K562 (cell line): ENCODE measurements at regions of chr12 and their contacts with region 1.

Region 1: DNA sequence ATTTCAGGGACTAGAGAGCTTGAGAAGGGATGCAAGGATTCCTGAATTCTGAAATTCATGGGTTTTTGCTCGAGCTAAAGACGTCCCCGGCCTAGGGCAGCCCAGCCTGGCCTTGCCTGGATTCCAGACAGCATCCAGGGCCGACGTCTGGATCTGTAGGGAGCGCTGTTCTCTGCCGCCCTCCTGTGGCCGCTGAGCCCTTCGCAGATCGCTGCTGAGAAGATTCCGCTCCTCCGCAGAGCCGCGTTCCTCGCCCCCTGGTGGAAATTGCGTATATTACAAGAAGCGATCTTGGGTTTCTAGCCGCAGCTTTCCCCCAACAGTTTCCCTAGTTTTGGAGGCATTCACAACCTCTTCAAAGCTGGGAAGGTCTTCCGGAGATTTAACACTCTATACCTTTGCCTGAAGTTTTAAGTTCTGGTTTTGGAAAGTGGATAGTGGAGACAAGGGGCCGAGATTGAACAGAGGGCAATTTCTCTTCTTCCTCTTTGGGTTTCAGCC is 5.1 kb downstream of the CISTR start:
- DNase-seq: peak; percentile 89 to 91 (median 90)
- ATAC-seq: peak; percentile 95
- H3K4me3 ChIP-seq: no peak overlapping the region
- H3K27ac ChIP-seq: no peak overlapping the region
- H3K4me1 ChIP-seq: peaks cover 0 to 11% of the 10 kb centered on the region in 2 experiments; a peak in 4 of 5 replicates
- H3K27me3 ChIP-seq: peaks cover 42 to 87% of the 10 kb centered on the region in 2 experiments
- CTCF ChIP-seq: peak; percentile 100
- EP300 ChIP-seq: no peak
- POLR2A ChIP-seq: no peak
- RAD21 ChIP-seq: peak; percentile 91 to 96

Region 2: DNA sequence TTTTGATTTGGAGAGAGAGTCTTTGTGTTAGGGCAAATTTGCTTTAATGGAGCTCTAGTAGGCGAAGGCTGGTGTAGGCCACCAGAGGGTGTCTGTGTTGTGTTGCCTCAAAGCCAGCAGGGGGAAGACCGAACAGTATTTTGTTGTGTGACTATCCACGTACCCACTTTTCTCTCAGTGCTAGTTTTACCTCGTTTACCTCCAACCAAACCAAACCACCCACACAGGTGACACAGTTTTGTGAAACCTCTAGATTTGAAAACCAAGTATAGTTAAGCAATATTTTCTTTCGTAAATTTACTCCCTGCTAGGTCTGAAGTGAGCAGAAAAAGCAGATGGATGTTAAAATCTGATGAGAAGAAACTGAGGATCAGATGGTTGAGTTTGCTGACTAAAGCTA is 203.1 kb before region 1 on chr12:
- CTCF ChIA-PET with region 1: interaction called, 13 read pairs
- POLR2A ChIA-PET with region 1: no interaction called
- in situ Hi-C with region 1: no loop called
- intact Hi-C with region 1: loop called (anchors 2 kb)
- DNase-seq: peak; percentile 42 to 63 (median 58)
- ATAC-seq: peak; percentile 98
- H3K4me3 ChIP-seq: no peak overlapping the region
- H3K27ac ChIP-seq: no peak overlapping the region
- H3K4me1 ChIP-seq: no peaks in the 10 kb centered on the region; a peak in 1 of 5 replicates
- H3K27me3 ChIP-seq: no peaks in the 10 kb centered on the region
- CTCF ChIP-seq: peak; percentile 82 to 99 (median 98)
- EP300 ChIP-seq: no peak
- POLR2A ChIP-seq: no peak
- RAD21 ChIP-seq: peak; percentile 50 to 75

Region 3: GRCh38 chr12:53701518-53702260 is 45.0 kb before region 1 on chr12:
- CTCF ChIA-PET with region 1: interaction called, 252 read pairs
- POLR2A ChIA-PET with region 1: interaction called, 15 read pairs
- in situ Hi-C with region 1: loop called (anchors 5 kb)
- intact Hi-C with region 1: loop called (anchors 1 kb)
- DNase-seq: peak; percentile 58 to 82 (median 68)
- ATAC-seq: peak; percentile 99
- H3K4me3 ChIP-seq: no peak overlapping the region
- H3K27ac ChIP-seq: no peak overlapping the region
- H3K4me1 ChIP-seq: no peaks in the 10 kb centered on the region
- H3K27me3 ChIP-seq: peaks cover 47 to 50% of the 10 kb centered on the region in 2 experiments
- CTCF ChIP-seq: peak; percentile 97 to 99 (median 98)
- EP300 ChIP-seq: no peak
- POLR2A ChIP-seq: no peak
- RAD21 ChIP-seq: peak; percentile 90 to 98